Ovary (tissue), 10 donors: ENCODE measurements at regions of chr2 and their contacts with region 1.

Region 1: DNA sequence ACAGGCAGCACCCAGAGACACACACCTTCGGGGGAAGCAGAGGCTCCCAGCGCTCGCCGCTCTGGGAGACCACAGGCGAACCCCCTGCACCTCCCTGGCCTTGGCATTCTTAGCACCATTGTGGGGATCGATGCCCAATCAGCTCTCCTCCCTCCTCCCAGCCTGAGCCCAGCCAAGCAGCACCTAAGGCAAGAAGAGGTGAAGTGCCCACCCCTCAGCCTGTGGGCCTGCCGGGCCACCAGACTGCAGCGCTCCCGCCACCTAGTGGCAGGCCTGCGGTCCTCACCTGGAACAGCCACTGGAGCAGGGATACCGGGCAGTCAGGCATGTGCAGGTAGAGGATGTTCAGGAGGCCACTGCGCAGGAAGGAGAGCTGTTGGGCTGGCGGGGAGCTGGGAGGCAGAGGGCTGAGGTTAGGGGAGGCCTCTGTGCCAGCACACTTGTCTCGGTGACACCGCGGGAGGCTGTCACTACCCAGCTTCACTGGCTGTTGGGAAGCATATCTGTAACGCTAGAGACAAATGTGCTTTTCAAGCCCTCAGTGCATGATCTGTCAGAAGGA is 35.2 kb downstream of the FAM178B start:
- DNase-seq: peak; percentile 76 to 82 (median 78)
- H3K4me3 ChIP-seq: no peak overlapping the region
- H3K27ac ChIP-seq: peak overlapping the region in 1 of 2 donors; percentile 6
- H3K4me1 ChIP-seq: peaks cover 34% of the 10 kb centered on the region
- H3K27me3 ChIP-seq: no peaks in the 10 kb centered on the region
- CTCF ChIP-seq: peak; percentile 84 to 92 (median 89)
- EP300 ChIP-seq: no peak
- POLR2A ChIP-seq: peak; percentile 12

Region 2: DNA sequence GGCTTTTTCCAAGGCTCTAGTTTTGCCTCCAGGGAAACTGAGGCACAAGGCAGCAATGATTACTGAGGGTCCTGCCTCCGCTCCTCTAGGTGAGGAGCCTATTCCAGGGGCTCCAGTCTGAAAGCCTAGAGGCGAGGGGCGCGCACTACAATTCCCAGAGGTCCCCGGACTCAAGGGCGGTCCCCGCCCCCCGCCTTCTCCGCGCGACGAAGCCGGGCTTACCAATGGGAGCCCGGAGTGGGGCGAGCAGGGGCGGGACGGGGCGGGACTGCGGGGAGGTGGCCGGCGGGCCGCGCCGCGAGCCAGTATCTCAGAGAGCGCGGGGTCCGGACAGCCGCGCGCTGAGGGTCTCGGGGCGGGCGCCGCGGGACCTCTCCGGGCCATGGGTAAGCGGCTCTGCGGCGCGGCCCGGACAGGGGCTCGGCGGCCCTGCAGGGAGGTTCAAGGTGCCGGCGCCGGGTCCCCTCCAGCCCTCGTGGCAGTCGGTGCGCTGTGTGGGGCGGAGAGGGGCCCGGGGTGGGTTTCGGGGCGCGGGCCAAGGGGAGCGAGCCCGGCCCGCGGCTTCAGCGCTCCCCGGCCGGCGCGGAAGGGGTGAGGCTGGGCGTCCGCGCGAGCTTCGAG is 414.6 kb before region 1 on chr2 and contains the start of gene ARID5A:
- intact Hi-C with region 1: loop called in 1 of 4 experiments (anchors 10 kb)
- DNase-seq: peak; percentile 92 to 96 (median 95)
- H3K4me3 ChIP-seq: peak within 1 kb of the TSS; percentile 72
- H3K27ac ChIP-seq: peak within 1 kb of the TSS; percentile 99
- H3K4me1 ChIP-seq: peaks cover 13% of the 10 kb centered on the region
- H3K27me3 ChIP-seq: no peaks in the 10 kb centered on the region
- CTCF ChIP-seq: peak; percentile 16 to 71 (median 57)
- EP300 ChIP-seq: no peak
- POLR2A ChIP-seq: peak; percentile 97
- total RNA-seq, gene ARID5A: 11.7 to 46.1 (median 17.1) TPM

Region 3: DNA sequence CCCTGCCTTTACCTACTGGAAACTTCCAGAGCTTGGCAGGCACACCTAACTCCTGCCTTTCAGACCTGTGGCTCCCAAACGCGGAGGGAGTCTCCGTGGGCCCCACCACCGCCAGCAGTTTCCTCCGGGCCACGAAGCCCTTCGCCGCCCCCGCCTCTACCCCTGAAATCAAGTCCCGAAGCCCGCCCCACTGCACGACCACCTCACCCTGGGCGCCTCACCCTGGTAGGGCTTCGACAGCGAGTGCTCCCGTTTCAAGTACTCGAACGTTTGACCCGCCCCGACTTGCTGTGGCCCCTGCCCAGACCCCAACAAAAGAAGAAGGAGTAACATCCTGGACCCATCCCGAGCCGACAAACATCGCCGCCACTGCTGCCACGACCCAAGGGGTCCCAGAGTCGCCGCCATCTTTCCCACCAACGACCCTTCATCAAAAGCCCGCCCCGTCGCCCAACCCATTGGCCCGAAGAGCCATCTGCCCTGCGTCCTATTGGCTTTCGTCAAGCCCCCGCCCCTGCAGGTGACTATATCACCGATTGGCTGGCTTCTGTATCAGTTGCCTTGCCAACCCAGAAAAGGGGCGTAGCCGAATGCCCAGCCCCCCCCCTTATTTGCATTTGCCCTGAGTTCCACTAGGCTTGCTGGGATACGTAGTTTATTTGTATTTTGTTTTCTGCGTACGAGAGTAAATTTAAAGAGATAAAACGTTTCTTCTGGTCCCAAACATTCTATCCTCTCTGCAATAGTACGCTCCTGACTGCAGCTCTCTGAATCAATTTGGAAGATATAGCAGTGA is 211.3 kb before region 1 on chr2 and contains the start of gene LMAN2L:
- intact Hi-C with region 1: loop called in 1 of 4 experiments (anchors 10 kb)
- DNase-seq: peak; percentile 96 to 99 (median 97)
- H3K4me3 ChIP-seq: peak within 1 kb of the TSS; percentile 85
- H3K27ac ChIP-seq: peak within 1 kb of the TSS; percentile 62 to 68
- H3K4me1 ChIP-seq: peaks cover 4% of the 10 kb centered on the region
- H3K27me3 ChIP-seq: no peaks in the 10 kb centered on the region
- CTCF ChIP-seq: no peak
- EP300 ChIP-seq: no peak
- POLR2A ChIP-seq: peak; percentile 61
- total RNA-seq, gene LMAN2L: 14.8 to 29.4 (median 22.5) TPM

Region 4: DNA sequence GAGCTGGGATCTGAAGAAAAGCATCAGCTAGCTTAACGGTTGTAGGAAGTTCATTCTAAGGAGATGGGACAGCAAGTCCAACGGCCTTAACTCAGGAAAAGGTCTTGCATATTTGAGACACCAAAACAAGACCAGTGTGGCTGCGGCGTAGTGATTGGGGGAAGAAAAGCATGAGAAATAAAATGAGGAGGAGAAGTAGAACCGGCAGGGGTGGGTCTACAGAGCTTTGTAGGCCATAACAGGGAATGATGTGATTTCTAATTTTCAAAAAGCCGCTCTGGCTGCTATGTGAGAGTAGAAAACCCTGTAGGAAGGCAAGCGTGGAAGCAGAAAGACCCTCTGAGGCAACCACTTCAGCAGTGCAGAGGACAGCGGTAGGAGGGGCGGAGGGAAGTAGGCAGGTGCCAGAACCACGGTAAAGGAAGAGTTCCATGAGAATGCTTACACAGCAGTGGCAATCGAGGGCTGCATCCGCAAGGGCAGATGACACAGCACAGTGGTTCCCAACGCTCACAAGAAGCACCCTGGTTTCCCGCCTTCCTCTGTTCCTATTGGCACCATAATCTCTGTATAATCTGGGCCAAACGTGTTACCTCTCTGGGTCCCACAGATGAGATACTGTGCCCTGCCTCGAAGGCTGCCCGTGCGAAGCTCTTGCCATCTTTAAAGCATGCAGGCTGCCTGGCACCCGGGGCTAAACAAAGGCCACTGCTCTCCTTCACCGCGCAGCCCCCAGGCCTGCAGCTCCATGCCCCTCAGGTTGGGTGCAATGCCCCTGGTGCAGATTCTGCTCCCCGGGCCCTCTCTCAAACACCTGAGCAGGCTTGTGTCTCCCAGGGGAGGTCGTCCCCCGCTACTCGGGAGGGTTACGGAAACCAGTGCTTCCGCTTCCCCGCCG is 94.1 kb before region 1 on chr2:
- intact Hi-C with region 1: loop called in 3 of 4 experiments (anchors 2 to 5 kb)
- DNase-seq: no peak
- H3K4me3 ChIP-seq: peak overlapping the region; percentile 96
- H3K27ac ChIP-seq: peak overlapping the region in 1 of 2 donors; percentile 62
- H3K4me1 ChIP-seq: peaks cover 14% of the 10 kb centered on the region
- H3K27me3 ChIP-seq: no peaks in the 10 kb centered on the region
- CTCF ChIP-seq: no peak
- EP300 ChIP-seq: no peak
- POLR2A ChIP-seq: no peak

Region 5: GRCh38 chr2:96868555-96869280 is 82.5 kb before region 1 on chr2:
- intact Hi-C with region 1: loop called in 1 of 4 experiments (anchors 5 kb)
- DNase-seq: peak; percentile 88 to 92 (median 90)
- H3K4me3 ChIP-seq: peak overlapping the region; percentile 91
- H3K27ac ChIP-seq: peak overlapping the region; percentile 96 to 98
- H3K4me1 ChIP-seq: peaks cover 10% of the 10 kb centered on the region
- H3K27me3 ChIP-seq: no peaks in the 10 kb centered on the region
- CTCF ChIP-seq: peak; percentile 38 to 76 (median 66)
- EP300 ChIP-seq: no peak
- POLR2A ChIP-seq: peak; percentile 17

Region 6: GRCh38 chr2:96907115-96908041 is 43.8 kb before region 1 on chr2:
- intact Hi-C with region 1: loop called in 1 of 4 experiments (anchors 10 kb)
- DNase-seq: peak; percentile 64 to 76 (median 70)
- H3K4me3 ChIP-seq: peak overlapping the region; percentile 11
- H3K27ac ChIP-seq: peak overlapping the region; percentile 40 to 78
- H3K4me1 ChIP-seq: peaks cover 18% of the 10 kb centered on the region
- H3K27me3 ChIP-seq: no peaks in the 10 kb centered on the region
- CTCF ChIP-seq: no peak
- EP300 ChIP-seq: no peak
- POLR2A ChIP-seq: peak; percentile 41